HAP-1 (cell line): ENCODE measurements at regions of chr17 and their contacts with region 1.

Region 1: GRCh38 chr17:9529033-9529700 is 46.5 kb downstream of the STX8 start:
- DNase-seq: no peak
- H3K4me3 ChIP-seq: no peak overlapping the region
- H3K4me1 ChIP-seq: peaks cover 10% of the 10 kb centered on the region
- H3K27me3 ChIP-seq: no peaks in the 10 kb centered on the region

Region 2: DNA sequence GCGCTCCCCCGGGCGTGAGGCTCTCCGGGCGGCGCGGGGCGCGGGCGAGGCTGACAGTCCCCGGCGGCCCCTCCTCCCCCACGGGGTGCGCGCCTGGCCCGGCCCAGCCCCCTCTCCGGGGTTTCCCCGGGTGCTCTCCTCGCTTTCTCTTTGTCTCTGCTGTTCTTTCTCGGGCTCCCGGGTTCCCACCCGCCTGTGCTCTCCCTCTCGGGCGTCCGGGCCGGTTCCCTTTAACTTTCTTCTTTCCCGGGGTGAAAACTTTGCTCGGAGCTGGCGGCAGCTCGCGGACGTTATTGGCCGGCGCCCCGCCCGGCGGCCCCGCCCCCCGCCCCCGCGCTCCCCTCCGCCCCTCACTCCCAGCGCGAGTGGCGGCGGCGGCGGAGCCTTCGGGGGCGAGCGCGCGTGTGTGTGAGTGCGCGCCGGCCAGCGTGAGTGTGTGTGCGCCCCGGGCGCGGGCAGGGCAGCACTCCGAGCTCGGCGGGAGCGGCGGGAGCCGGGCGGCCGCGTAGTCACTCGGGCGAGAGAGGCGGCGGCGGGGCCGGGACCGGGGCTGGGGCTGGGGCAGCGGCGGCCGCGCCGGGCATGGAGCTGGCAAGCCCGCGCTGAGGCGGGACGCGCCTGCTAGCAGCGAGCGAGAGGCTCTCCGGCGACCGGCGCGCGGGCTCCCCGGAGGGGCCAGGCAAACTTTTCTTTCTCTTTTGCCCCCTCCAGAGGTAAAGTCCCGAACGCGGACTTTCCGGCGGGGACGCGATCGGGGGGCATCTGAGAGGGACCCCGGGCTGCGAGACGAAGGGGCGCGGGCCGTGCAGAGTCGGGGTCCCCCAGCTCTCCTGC is 507.8 kb before region 1 on chr17 and contains the start of gene NTN1:
- in situ Hi-C with region 1: loop called (anchors 25 kb)
- DNase-seq: peak; percentile 28 to 60
- H3K4me3 ChIP-seq: peak within 1 kb of the TSS; percentile 47
- H3K4me1 ChIP-seq: no peaks in the 10 kb centered on the region; the same call in 1 of the 2 replicates
- H3K27me3 ChIP-seq: peaks cover 8% of the 10 kb centered on the region